Mammary epithelial cell (primary cell): ENCODE measurements at regions of chr19 and their contacts with region 1.

Region 1: GRCh38 chr19:344625-345319 is at the start of gene MIER2:
- DNase-seq: peak; percentile 64
- H3K4me3 ChIP-seq: peak within 1 kb of the TSS; percentile 53 to 62 (median 57)
- H3K27ac ChIP-seq: peak within 1 kb of the TSS; percentile 50
- H3K4me1 ChIP-seq: peaks cover 23% of the 10 kb centered on the region
- H3K27me3 ChIP-seq: no peaks in the 10 kb centered on the region
- CTCF ChIP-seq: no peak
- total RNA-seq, gene MIER2: 17.8 to 41.6 TPM

Region 2: DNA sequence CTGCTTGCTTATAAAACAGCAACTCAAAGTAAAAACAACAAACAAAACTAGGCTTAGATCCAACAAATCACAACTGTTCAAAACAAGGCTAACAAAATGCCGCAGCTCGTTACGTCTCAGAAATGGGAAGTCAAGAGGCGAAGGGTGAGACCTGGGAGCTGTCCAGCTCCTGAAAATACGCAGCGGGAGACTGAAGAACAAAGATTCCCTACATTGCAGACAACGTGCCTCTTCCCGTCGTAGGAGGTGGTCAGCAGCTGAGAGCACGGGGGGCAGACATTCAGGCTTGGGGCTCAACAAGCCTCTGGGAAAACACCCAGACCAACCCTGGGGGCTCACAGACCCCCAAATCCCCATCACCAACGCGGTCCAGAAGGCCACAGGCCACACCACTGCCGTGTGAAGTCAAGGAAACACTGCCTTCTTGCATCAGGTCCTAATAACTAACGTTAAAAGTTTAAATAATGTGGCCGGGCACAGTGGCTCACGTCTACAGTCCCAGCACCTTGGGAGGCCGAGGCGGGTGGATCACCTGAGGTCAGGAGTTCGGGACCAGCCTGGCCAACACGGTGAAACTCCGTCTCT is 67.1 kb before region 1 on chr19:
- CTCF ChIA-PET with region 1: no interaction called
- dilution Hi-C with region 1: loop called (anchors 5 kb)
- in situ Hi-C with region 1: no loop called
- intact Hi-C with region 1: no loop called
- DNase-seq: no peak
- H3K4me3 ChIP-seq: no peak overlapping the region
- H3K27ac ChIP-seq: no peak overlapping the region
- H3K4me1 ChIP-seq: no peaks in the 10 kb centered on the region
- H3K27me3 ChIP-seq: no peaks in the 10 kb centered on the region
- CTCF ChIP-seq: no peak

Region 3: GRCh38 chr19:294946-295686 is 49.7 kb before region 1 on chr19:
- CTCF ChIA-PET with region 1: no interaction called
- dilution Hi-C with region 1: no loop called
- in situ Hi-C with region 1: no loop called
- intact Hi-C with region 1: loop called (anchors 5 kb)
- DNase-seq: no peak
- H3K4me3 ChIP-seq: peak overlapping the region in 1 of 3 experiments; percentile 7
- H3K27ac ChIP-seq: no peak overlapping the region
- H3K4me1 ChIP-seq: peaks cover 14% of the 10 kb centered on the region
- H3K27me3 ChIP-seq: peaks cover 5% of the 10 kb centered on the region
- CTCF ChIP-seq: peak; percentile 63 to 83

Region 4: DNA sequence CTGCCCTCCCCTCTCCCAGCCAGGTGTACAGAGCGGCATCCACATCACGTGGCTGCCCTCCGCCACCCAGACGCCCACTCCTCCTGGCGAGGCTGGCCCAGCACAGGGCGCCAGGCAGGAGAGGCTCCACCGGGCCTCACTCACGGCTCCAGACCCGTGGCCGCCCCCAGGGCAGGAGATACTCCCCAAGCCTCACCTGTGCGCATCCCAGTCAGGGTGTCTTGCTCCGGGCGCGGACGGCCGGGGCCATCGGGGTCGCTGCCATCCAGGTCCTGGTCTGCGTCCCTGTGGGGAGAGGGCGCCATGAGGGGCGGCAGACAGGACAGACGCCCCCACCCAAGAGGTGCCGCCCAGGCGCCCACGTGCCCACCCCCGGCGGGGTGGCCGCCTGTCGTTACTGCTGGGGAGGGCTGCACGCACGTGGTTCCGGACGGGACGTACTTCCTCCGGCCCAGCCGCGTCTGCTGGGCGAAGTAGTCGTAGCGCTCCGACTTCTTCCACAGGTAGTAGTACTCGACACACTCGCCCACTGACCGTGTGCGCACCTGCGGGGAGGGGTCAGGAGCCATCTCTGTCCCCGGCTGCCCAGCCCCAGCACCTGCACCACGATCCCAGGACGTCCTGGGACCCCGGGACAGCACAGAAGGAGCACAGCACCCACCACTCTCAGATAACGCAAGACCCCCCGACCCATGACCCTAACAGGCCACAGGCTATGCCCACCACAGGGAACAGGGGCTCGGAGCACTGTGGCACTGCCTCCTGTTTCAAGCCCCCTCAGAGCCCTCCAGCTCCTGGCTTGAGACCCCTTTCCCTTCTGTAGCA is 36.2 kb before region 1 on chr19:
- CTCF ChIA-PET with region 1: no interaction called
- dilution Hi-C with region 1: loop called (anchors 5 kb)
- in situ Hi-C with region 1: no loop called
- intact Hi-C with region 1: no loop called
- DNase-seq: no peak
- H3K4me3 ChIP-seq: no peak overlapping the region
- H3K27ac ChIP-seq: no peak overlapping the region
- H3K4me1 ChIP-seq: no peaks in the 10 kb centered on the region
- H3K27me3 ChIP-seq: no peaks in the 10 kb centered on the region
- CTCF ChIP-seq: no peak

Region 5: GRCh38 chr19:383922-384798 is 39.4 kb after region 1 on chr19:
- CTCF ChIA-PET with region 1: no interaction called
- dilution Hi-C with region 1: no loop called
- in situ Hi-C with region 1: no loop called
- intact Hi-C with region 1: no loop called
- DNase-seq: no peak
- H3K4me3 ChIP-seq: no peak overlapping the region
- H3K27ac ChIP-seq: no peak overlapping the region
- H3K4me1 ChIP-seq: peaks cover 8% of the 10 kb centered on the region
- H3K27me3 ChIP-seq: no peaks in the 10 kb centered on the region
- CTCF ChIP-seq: peak in 1 of 2 donors; percentile 2

Region 6: DNA sequence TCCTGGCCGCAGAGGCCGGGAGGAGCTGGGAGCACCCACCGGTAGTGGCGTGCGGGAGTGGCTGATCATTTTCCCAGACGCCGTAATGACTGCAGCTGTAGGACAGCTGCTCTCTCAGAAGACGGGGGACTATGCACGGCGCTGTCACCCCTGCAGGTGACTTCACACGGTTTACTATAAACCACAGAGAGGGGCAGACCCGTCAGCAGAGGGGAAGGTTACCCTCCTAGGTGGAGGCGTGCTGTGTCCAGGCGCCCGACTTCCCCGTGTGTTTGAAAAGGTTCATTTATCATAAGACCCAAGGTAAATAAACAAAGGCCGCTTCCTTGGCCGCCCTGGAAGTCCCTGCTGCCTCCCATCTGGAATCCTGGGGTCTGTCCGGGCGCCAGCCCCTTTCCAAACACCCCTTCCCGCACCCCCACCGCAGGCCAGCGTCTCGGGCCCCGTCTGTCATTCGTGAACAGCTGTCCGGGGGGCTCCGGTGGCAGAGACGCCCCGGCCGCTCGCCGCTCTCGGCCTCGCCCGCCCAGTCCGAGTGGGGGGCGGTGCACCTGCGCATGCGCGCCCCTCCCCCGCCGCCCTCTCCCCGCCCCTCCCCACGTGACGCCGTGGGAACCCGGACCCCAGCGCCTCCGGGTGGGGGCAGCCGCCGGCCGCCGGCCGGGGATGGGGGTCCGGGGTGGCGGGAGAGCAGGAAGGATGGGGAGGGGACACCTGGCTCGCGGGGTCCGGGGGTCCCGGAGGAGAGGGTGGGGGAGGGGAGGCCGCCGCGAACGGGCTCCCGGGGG is 115.1 kb after region 1 on chr19:
- CTCF ChIA-PET with region 1: no interaction called
- dilution Hi-C with region 1: loop called (anchors 5 kb)
- in situ Hi-C with region 1: no loop called
- intact Hi-C with region 1: no loop called
- DNase-seq: no peak
- H3K4me3 ChIP-seq: peak overlapping the region; percentile 39 to 67 (median 57)
- H3K27ac ChIP-seq: no peak overlapping the region
- H3K4me1 ChIP-seq: peaks cover 6% of the 10 kb centered on the region
- H3K27me3 ChIP-seq: peaks cover 4% of the 10 kb centered on the region
- CTCF ChIP-seq: no peak

Region 7: DNA sequence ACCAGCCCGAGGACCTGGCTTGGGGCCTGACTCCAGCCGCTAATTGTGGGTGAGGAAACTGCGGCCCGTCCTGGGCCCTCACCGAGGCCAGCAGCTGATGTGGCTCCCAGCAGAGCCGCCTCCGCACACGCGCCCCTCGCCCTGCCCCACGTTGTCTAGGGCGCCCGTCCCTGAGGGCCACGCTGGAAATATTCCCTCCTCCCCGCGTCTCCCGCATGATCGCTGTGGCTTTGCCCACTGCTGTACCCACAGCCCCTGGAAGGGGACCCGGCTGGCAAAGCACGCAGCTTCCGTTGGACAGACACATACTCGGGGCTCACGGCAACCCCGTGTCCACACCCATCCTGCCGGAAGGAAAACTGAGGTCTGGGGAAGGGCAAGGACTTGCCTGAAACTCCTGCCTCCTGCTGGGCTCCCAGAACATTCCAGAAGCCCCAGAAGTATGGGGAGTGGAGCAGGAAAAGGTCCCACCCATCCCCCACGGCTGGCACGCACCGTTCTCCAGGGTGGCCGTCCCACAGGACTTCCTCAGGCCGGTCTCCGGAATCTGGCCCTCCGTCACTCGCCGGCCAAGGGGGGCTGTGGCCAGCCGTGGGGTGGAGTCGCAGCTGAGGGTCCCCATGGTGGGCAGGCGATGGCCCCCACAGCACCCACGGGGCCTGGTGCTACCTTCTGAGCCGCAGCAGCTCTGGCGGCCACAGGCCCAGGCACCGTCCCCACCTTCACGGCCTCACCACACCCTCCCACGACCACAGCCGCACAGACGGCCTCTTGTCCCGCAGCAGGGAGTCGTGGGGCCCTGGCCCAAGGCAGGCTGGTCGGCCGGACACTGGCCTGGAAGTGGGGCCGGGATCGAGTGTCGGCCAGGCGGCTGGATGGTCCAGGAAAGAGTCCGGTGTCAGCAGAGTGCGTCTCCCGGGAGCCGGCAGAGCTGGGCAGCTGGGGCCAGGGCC is 129.6 kb after region 1 on chr19:
- CTCF ChIA-PET with region 1: no interaction called
- dilution Hi-C with region 1: no loop called
- in situ Hi-C with region 1: no loop called
- intact Hi-C with region 1: no loop called
- DNase-seq: no peak
- H3K4me3 ChIP-seq: no peak overlapping the region
- H3K27ac ChIP-seq: no peak overlapping the region
- H3K4me1 ChIP-seq: peaks cover 5% of the 10 kb centered on the region
- H3K27me3 ChIP-seq: no peaks in the 10 kb centered on the region
- CTCF ChIP-seq: no peak

Region 8: DNA sequence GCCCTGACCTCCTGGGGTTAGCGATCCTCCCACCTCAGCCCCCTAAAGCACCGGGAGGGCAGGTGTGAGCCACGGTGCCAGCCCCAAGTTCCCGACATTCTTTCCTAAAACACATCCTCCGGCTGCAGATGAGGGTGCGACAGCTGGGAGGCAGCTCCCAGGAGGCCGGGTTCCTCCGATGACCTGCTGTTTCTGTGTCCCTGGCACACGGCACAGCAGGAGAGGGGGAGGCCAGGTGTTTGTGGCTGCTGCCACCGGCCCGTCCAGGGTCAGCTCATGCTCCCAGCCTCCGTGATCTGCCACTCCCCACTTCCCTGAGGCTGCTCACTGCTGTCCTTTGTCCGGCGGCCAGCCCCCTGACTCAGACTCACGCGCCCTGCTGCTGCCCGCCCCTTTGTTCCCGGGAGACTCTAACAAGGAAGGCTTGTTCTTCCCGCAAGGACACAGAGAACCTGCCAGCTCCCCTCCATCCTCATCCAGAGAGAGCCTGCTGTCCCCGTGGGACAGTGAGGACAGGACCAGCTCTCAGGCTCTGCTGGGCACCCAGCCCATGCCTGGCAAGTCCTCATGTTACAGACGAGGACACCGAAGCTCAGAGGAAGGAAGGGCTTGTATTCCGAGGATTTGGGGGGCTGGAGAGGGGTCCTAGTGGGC is 140.9 kb after region 1 on chr19:
- CTCF ChIA-PET with region 1: no interaction called
- dilution Hi-C with region 1: no loop called
- in situ Hi-C with region 1: no loop called
- intact Hi-C with region 1: loop called (anchors 2 kb)
- DNase-seq: peak; percentile 75
- H3K4me3 ChIP-seq: peak overlapping the region in 1 of 3 experiments; percentile 13
- H3K27ac ChIP-seq: no peak overlapping the region
- H3K4me1 ChIP-seq: peaks cover 20% of the 10 kb centered on the region
- H3K27me3 ChIP-seq: no peaks in the 10 kb centered on the region
- CTCF ChIP-seq: no peak

Region 9: GRCh38 chr19:506404-507285 is 161.9 kb after region 1 on chr19:
- CTCF ChIA-PET with region 1: no interaction called
- dilution Hi-C with region 1: no loop called
- in situ Hi-C with region 1: no loop called
- intact Hi-C with region 1: loop called (anchors 1 kb)
- DNase-seq: peak; percentile 83
- H3K4me3 ChIP-seq: peak overlapping the region; percentile 85 to 93 (median 92)
- H3K27ac ChIP-seq: peak overlapping the region; percentile 87
- H3K4me1 ChIP-seq: peaks cover 26% of the 10 kb centered on the region
- H3K27me3 ChIP-seq: no peaks in the 10 kb centered on the region
- CTCF ChIP-seq: peak; percentile 85 to 92